ENCODE measurements at regions of chr19 and their contacts with region 1.

Region 1: GRCh38 chr19:41353466-41354342 is at the start of gene TGFB1:
- H3K4me3 ChIP-seq: peak within 1 kb of the TSS; percentile 43
- H3K27ac ChIP-seq: peak within 1 kb of the TSS; percentile 77; the same call in 1 of the 2 replicates
- H3K4me1 ChIP-seq: peaks cover 5% of the 10 kb centered on the region; the same call in 1 of the 2 replicates
- CTCF ChIP-seq: peak; percentile 96

Region 2: DNA sequence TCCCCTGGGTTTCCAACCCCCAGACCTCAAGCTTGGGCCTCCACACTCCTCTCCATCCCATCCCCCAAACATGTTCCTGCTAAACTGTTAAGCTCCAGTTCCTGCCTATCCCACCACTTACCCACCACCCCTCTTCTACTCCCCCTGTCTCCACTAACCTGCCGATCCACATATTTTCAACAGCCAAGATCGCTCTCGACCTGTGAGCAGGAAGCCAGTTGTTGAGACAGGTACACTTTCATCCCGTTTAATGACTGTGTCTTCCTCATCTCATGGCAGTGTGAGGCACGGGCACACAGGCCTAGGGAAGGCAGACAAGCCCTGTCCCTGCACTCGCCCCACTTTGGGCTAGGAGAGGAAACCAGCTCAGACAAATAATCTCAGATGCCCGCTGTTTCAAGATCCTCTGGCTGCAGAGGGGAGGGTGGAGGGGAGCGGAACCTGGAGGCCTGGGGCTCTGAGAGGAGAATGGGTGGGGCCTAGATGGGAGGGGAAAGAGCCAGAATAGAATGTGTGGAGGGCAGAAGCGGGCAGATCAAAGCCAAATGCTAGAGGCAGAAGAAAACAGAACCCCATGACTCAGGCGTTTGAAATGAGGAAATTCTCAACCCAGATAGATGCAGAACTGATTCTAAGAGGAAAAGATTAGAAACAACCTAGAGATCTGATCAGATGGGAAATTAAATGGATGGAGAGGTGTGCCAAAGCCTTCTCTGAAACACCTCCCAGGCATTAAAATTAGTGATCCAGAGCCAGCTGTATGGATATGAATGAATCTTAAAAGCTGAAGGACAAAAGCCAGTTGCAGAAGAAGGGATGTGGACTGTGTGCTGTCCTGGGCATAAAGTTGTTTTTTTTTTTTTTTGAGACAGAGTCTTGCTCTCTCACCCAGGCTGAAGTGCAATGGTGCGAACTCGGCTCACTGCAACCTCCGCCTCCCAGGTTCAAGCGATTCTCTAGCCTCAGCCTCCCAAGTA is 177.6 kb before region 1 on chr19:
- CTCF ChIA-PET with region 1: no interaction called
- POLR2A ChIA-PET with region 1: no interaction called
- H3K4me3 ChIP-seq: no peak overlapping the region
- H3K27ac ChIP-seq: no peak overlapping the region
- H3K4me1 ChIP-seq: peaks cover 5% of the 10 kb centered on the region
- CTCF ChIP-seq: no peak

Region 3: DNA sequence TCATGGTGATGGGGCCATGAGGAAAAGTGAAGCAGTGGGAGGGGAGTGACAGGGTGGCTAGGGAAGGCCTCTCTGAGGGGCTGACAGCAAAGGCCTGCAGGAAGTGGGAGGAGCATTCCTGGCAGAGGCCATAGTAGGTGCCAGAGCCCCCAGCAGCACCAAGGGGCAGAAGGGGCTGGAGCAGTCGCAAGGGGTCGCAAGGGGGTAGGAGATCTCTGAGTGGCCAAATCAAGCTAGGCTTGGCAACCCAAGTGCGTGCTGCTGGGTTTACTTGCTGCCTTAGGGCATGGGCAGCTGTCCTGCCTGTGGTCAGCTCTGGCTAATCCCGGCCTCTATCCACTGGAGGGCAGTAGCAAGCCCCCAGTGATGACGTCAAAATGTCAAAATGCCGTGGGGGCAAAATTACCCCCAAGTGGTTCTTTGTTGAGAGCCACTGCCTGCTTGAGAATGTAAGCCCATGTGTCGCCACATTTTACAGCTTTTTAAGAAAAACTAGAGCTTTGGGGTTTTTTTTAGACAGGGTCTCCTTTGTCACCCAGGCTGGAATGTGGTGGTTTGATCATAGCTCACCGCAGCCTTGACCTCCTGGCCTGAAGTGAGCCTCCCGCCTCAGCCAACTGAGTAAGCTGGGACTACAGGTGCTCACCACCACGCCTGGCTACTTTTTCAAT is 32.0 kb before region 1 on chr19:
- CTCF ChIA-PET with region 1: interaction called, 11 read pairs
- POLR2A ChIA-PET with region 1: interaction called, 22 read pairs
- H3K4me3 ChIP-seq: no peak overlapping the region
- H3K27ac ChIP-seq: no peak overlapping the region
- H3K4me1 ChIP-seq: peaks cover 22% of the 10 kb centered on the region
- CTCF ChIP-seq: peak; percentile 76

Measured in HEK293 (cell line).